ENCODE measurements at regions of chr19 and their contacts with region 1.

Region 1: DNA sequence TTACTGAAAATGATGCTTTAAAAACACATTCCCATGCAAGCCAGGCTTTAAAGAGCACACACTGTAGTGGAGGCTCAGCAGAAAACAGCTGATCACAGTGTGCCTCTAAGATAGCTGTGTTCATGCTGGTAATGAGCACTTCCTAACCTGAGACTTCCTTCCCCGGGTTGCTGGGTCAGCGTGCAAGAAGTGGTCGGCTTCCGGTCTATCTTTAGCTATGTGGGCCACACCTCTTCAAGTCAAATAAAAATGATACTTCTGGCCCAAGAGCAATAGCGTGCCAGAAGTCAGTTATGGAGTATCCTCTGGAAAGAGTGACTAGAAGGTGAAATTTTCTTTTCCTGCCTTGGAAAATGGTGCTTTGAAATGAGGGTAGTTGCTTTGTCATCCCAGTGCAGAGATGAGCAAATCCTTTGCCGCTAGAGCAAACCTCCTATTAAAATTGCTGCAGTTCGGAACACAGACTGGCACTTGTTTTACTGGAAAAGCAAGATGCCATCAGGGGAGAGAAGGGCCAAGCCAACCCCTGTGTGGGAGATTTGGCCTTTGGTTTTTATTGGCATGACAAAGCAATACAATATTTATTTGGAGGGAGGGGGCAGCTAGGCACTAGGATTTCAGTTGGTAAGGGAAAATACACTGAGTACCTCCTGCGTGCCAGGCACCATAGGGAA is 64.2 kb downstream of the ARHGAP35 start:
- DNase-seq: no peak

Region 2: DNA sequence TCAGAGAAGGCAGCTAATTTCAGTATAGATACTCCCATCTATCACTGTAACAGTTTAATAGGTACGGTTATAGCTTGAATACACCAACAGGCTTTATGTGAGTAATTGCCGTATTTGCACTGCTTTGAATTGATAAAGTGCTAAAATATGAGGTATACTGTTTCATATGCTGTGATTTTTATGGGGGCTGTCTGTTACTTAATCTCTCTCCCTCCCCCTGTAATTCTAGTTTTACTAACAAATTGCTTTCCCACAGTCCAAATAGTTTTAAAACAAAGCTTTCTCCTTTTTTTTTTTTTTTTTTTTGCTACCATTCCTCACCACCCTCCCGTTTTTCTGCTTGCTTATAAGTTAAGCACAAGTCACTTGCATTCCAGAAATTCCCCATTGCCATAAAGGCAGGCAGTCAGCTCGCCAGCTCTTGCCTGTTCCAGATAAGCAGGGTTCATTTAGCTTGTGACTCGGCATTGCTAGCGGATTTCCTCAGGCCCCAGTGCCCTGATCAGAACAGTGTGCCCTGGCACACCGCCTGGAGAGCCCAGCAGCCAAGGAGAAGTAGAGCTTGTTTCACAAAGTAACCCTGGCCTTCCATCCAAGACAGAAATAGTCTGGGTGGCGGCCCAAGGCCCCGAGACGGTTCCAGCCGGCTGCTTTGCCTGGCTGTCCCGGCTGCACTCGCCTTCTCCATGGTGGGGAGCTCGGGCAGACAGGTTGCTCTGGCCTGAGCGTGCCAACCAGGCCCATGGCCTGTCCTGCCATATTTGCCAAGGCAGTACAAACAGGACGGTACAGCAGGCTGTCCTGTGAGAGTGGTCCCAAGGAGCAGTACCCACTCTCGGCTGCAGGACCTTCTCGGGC is 51.1 kb after region 1 on chr19:
- intact Hi-C with region 1: loop called (anchors 5 kb)
- DNase-seq: peak; percentile 56 to 95 (median 75)

Region 3: GRCh38 chr19:46990991-46991676 is 66.1 kb after region 1 on chr19:
- intact Hi-C with region 1: loop called (anchors 5 kb)
- DNase-seq: peak; percentile 72 to 98 (median 88)

Region 4: GRCh38 chr19:47005873-47006272 is 80.9 kb after region 1 on chr19:
- intact Hi-C with region 1: no loop called
- DNase-seq: no peak

Measured in posterior cingulate gyrus (tissue), 11 donors.